Astrocyte of the cerebellum (primary cell): ENCODE measurements at regions of chr17 and their contacts with region 1.

Region 1: DNA sequence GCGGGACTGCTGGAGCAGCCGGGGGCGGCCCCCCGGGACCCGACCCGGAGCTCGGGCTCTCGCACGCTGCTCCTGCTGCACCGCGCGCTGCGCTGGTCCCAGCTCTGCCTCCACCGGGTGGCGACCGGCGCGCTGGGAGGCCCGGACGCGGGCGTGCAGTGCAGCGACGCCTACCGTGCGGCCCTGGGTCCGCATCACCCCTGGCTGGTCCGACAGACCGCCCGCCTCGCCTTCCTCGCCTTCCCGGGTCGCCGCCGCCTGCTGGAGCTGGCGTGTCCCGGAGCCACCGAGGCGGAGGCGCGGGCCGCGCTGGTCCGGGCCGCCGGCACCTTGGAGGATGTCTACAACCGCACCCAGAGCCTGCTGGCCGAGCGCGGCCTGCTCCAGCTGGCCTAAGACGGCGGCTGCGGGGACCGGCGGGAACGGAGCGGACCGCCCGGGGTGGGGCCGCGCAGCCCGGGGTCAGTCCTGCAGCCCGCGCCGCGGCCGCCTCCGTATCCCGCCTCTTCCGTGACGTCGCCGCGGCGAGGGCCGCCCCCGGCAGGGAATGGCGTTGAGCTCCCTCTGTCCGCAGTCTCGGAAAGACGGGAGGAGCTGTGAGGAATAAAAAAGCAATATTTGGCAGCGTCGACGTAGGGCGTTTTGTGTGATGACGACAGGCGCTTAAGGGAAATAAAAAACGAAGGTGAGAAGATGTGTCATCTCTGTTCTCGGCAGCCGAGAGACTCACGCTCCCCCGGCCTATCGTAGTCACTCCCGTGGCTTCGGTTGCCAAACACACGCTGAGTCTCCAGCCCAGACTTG is 1.3 kb downstream of the GLTPD2 start:
- DNase-seq: peak; percentile 64
- H3K4me3 ChIP-seq: peak overlapping the region; percentile 58
- CTCF ChIP-seq: peak; percentile 51

Region 2: GRCh38 chr17:4728124-4728523 is 62.0 kb before region 1 on chr17:
- in situ Hi-C with region 1: loop called (anchors 5 kb)
- DNase-seq: no peak
- H3K4me3 ChIP-seq: no peak overlapping the region
- CTCF ChIP-seq: no peak

Region 3: GRCh38 chr17:4837471-4838308 is 47.6 kb after region 1 on chr17:
- in situ Hi-C with region 1: loop called (anchors 5 kb)
- DNase-seq: no peak
- H3K4me3 ChIP-seq: no peak overlapping the region
- CTCF ChIP-seq: no peak

Region 4: GRCh38 chr17:4849011-4849536 is 59.0 kb after region 1 on chr17:
- in situ Hi-C with region 1: no loop called
- DNase-seq: no peak
- H3K4me3 ChIP-seq: no peak overlapping the region
- CTCF ChIP-seq: no peak